ENCODE measurements at regions of chr1 and their contacts with region 1.

Region 1: GRCh38 chr1:151443846-151444782 is 15.2 kb downstream of the POGZ start:
- DNase-seq: peak; percentile 76
- H3K4me3 Mint-ChIP-seq: no peak overlapping the region
- H3K27ac Mint-ChIP-seq: peak overlapping the region; percentile 9
- H3K4me1 Mint-ChIP-seq: peaks cover 8% of the 10 kb centered on the region
- H3K27me3 Mint-ChIP-seq: no peaks in the 10 kb centered on the region
- CTCF ChIP-seq: peak; percentile 64

Region 2: GRCh38 chr1:151539990-151540981 is 96.2 kb after region 1 on chr1 and contains the start of gene TUFT1:
- CTCF ChIA-PET with region 1: interaction called, 8 read pairs
- intact Hi-C with region 1: loop called (anchors 2 kb)
- DNase-seq: peak; percentile 98
- H3K4me3 Mint-ChIP-seq: peak within 1 kb of the TSS; percentile 86
- H3K27ac Mint-ChIP-seq: peak within 1 kb of the TSS; percentile 92
- H3K4me1 Mint-ChIP-seq: peaks cover 28% of the 10 kb centered on the region
- H3K27me3 Mint-ChIP-seq: no peaks in the 10 kb centered on the region
- CTCF ChIP-seq: no peak
- total RNA-seq, gene TUFT1: 31.4 and 34.3 TPM in 2 replicates

Region 3: GRCh38 chr1:151728151-151729054 is 284.3 kb after region 1 on chr1:
- CTCF ChIA-PET with region 1: no interaction called
- intact Hi-C with region 1: no loop called
- DNase-seq: no peak
- H3K4me3 Mint-ChIP-seq: no peak overlapping the region
- H3K27ac Mint-ChIP-seq: peak overlapping the region; percentile 57
- H3K4me1 Mint-ChIP-seq: peaks cover 42% of the 10 kb centered on the region
- H3K27me3 Mint-ChIP-seq: no peaks in the 10 kb centered on the region
- CTCF ChIP-seq: no peak

Region 4: GRCh38 chr1:151945725-151946364 is 501.7 kb after region 1 on chr1:
- CTCF ChIA-PET with region 1: no interaction called
- intact Hi-C with region 1: no loop called
- DNase-seq: peak; percentile 97
- H3K4me3 Mint-ChIP-seq: peak overlapping the region; percentile 4
- H3K27ac Mint-ChIP-seq: peak overlapping the region; percentile 86
- H3K4me1 Mint-ChIP-seq: peaks cover 43% of the 10 kb centered on the region
- H3K27me3 Mint-ChIP-seq: no peaks in the 10 kb centered on the region
- CTCF ChIP-seq: no peak

Measured in Calu3 (cell line).